ENCODE measurements at regions of chr6 and their contacts with region 1.

Region 1: DNA sequence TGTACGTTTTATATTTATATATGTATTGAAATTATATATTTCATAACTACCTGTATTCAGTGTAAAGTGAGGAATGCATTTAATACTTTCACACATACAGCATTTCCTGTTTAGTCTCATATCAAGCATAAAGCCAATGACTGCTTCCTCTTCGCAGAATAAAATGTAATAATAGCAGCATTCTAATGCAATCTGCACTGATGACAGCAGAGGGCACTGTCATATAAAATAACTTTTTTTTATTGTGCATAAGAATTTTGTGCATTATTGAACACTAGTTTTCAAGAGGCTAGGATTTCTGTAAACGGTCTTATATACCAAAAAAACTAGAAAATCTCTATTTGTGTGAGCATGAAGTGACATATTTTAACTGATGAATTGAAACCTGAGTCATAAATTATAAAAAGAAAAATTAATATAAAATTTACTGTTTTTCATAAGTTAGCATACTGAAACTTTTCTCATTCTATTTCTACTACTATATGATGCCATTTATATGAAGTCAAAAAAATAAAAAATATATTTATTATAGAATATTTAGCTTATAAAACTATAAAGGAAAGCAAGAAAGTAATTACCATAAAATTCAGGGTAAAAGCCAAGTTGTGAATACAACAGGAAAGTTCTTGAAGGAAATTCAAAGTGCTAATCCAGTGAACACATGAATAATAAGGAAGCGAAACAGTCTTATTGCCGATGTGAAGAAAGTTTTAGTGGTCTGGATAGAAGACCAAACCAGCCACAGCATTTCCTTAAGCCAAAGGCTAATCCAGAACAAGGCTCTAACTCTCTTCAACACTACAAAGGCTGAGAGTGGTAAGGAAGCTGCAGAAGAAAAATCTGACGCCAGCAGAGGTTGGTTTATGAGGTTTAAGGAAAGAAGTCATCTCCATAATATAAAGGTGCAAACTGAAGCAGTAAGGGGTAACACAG is 36.3 kb downstream of the RNF146 start:
- DNase-seq: peak; percentile 63
- ATAC-seq: peak; percentile 59

Region 2: DNA sequence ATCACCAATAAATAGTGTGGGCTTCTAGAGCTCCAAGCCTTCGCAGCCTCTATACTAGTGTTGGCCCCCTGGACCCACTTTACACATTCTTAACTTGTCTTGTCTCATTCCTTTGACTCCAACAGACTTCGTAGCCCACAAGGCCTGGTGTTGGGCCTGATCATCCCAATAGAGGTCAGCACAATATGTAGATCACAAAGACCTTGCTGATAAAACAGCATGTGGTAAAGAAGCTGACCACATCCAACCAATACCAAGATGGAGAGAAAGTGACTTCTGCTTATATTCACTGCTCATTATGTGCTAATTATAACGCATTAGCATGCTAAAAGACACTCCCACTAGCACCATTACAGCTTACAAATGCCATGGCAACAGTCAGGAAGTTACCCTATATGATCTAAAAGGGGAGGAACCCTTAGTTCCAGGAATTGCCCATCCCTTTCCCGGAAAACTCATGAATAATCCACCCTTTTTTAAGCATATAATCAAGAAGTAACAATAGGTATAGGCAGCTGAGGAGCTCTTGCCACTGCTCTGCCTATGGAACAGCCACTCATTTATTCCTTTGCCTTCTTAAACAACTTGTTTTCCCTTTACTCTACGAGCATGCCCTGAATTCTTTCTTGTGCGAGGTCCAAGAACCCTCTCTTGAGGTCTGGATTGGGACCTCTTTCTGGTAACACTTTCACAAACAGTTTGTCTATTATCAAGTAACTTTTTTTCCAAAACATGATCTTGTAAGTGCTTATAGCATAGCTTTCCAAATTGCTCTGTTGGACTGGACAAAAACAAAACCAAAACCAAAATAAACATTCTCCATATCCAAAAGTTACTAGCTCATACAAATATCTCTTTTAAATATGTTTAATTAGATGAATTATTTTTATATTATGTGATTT is 95.0 kb after region 1 on chr6:
- intact Hi-C with region 1: no loop called
- DNase-seq: no peak
- ATAC-seq: peak; percentile 30

Region 3: DNA sequence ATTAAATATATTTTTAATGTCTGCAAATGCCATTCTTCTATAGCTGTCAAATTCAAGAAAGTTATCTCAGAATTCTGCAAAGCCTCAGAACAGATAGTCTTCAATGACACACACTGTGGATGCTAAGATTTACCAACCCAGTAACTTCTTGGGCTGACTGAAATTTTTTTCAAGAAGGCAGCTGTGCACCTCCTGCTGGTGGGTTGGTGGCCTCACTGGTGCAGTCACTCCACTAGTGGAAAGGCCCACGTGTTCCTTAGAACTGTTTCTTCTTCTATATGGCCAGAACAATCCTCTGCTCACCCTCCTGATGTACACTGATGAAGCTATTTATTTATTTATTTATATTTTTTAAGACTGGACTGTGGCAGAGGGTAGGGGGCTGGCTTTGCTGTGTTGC is 244.2 kb after region 1 on chr6:
- intact Hi-C with region 1: loop called (anchors 10 kb)
- DNase-seq: no peak
- ATAC-seq: no peak